Activated T-helper 2 cell treated with anti-CD3 and anti-CD28 coated beads, Interferon-gamma antibody, Interleukin-2, Interleukin-4, amounts not matched to agents 10 μg/mL and 5 μg/mL and 100 μg/mL, durations not matched to agents 14 hours and 24 hours and 36 hours (primary cell): ENCODE measurements at regions of chr3 and their contacts with region 1.

Region 1: DNA sequence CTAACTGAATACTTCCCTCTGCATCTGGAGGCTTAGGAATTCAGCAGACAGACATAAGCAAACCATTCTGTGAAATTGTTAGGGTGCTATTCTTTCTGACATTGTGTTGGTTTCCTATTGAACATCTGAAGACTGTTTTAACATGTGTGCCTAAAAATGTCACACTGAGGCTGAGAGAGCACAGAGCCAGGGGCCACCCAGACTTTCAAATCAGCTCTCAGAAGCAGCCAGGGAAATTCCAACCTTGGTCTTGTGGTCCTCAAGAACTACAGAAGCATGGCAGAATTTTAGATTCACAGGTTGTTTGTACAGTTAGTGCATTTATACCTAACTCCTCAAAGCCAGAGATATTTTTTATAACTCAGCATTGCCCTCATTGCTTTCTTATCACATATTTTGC is 929.2 kb upstream of the CFAP20DC start:
- DNase-seq: no peak
- H3K4me3 Mint-ChIP-seq: peak overlapping the region; percentile 35
- H3K27ac Mint-ChIP-seq: peak overlapping the region; percentile 92
- H3K4me1 Mint-ChIP-seq: peaks cover 26% of the 10 kb centered on the region
- H3K27me3 Mint-ChIP-seq: no peaks in the 10 kb centered on the region

Region 2: DNA sequence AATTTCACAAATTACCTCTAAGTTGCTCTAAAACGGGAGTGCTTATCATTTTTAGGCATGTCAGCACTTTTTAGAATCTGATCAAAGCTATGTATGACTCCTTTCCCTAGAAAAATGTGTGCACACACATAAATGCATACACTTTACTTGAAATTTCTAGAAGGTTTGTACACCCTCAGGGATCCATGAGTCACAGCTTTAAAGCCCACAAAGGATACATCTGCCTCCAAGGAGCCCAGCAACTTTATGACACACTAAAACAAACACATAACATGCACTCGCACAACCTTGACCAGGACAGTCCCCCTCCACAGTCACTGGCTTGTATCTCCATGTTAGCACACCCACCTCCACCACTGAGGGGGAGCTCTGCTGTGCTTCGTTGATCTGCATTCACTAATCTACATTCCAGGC is 207.2 kb before region 1 on chr3:
- intact Hi-C with region 1: loop called (anchors 10 kb)
- DNase-seq: no peak
- H3K4me3 Mint-ChIP-seq: no peak overlapping the region
- H3K27ac Mint-ChIP-seq: no peak overlapping the region
- H3K4me1 Mint-ChIP-seq: peaks cover 50% of the 10 kb centered on the region
- H3K27me3 Mint-ChIP-seq: no peaks in the 10 kb centered on the region

Region 3: DNA sequence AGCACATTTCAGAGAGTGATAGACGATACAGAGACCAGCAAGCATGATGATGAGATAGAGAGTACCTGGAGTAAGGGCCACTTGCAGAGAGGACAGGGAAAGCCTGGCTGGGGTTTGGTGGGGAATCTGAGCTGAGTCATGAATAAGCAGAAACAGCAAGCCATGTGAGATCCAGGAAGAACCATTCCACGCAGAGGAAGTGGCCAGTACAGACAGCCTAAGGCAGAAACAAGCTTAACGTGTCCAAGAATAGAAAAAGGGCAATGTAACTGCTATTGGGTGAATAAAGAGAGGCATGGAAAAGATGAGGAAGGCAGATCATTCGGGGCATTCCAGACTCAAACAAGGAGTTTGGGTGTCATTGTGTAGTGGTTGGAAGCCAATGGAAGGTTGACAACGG is 112.9 kb before region 1 on chr3:
- intact Hi-C with region 1: loop called (anchors 1 kb)
- DNase-seq: no peak
- H3K4me3 Mint-ChIP-seq: no peak overlapping the region
- H3K27ac Mint-ChIP-seq: peak overlapping the region; percentile 2
- H3K4me1 Mint-ChIP-seq: peaks cover 31% of the 10 kb centered on the region
- H3K27me3 Mint-ChIP-seq: no peaks in the 10 kb centered on the region

Region 4: DNA sequence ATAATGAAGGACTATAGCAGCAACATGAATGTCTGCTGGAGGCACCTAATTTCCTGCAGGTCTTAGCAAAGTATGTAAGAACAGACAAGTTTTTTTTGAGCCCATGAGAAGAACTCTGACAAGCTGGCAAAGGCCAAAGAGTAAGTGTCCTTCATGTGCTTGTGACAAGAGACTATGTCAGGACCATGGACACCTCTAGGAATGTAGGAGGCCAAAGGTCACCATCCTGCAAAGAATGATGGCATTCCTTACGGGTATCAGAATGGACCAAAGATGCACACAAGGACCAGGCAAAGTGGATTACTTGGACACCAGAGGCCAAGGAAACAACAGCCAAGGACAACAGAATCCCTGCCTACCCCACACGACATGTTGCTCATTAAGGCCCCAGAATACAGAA is 70.7 kb before region 1 on chr3:
- intact Hi-C with region 1: no loop called
- DNase-seq: no peak
- H3K4me3 Mint-ChIP-seq: no peak overlapping the region
- H3K27ac Mint-ChIP-seq: no peak overlapping the region
- H3K4me1 Mint-ChIP-seq: no peaks in the 10 kb centered on the region
- H3K27me3 Mint-ChIP-seq: no peaks in the 10 kb centered on the region

Region 5: DNA sequence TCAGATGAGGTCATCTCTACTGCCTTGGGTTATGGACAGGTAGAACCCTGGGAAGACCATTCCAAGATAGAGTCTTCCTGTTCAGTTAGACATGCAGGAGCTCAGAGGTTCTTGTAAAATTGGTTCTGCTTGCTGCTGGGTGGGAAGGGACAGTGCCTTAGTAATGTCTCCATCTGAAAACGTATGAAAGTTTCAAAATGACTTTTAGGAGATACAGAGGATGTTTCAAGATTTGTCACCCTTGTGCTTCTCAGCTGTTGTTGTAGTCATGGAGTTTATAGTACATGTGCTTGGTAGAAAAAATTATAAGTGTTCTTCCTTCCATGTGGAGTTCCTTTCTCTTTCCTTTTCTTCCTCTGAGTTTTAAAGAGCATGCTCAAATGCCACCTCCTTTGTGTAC is 44.0 kb before region 1 on chr3:
- intact Hi-C with region 1: loop called (anchors 1 kb)
- DNase-seq: no peak
- H3K4me3 Mint-ChIP-seq: no peak overlapping the region
- H3K27ac Mint-ChIP-seq: peak overlapping the region; percentile 69
- H3K4me1 Mint-ChIP-seq: peaks cover 38% of the 10 kb centered on the region
- H3K27me3 Mint-ChIP-seq: no peaks in the 10 kb centered on the region

Region 6: GRCh38 chr3:60017631-60018030 is 38.7 kb after region 1 on chr3:
- intact Hi-C with region 1: loop called (anchors 1 kb)
- DNase-seq: peak; percentile 63
- H3K4me3 Mint-ChIP-seq: peak overlapping the region; percentile 61
- H3K27ac Mint-ChIP-seq: peak overlapping the region; percentile 98
- H3K4me1 Mint-ChIP-seq: peaks cover 64% of the 10 kb centered on the region
- H3K27me3 Mint-ChIP-seq: no peaks in the 10 kb centered on the region

Region 7: DNA sequence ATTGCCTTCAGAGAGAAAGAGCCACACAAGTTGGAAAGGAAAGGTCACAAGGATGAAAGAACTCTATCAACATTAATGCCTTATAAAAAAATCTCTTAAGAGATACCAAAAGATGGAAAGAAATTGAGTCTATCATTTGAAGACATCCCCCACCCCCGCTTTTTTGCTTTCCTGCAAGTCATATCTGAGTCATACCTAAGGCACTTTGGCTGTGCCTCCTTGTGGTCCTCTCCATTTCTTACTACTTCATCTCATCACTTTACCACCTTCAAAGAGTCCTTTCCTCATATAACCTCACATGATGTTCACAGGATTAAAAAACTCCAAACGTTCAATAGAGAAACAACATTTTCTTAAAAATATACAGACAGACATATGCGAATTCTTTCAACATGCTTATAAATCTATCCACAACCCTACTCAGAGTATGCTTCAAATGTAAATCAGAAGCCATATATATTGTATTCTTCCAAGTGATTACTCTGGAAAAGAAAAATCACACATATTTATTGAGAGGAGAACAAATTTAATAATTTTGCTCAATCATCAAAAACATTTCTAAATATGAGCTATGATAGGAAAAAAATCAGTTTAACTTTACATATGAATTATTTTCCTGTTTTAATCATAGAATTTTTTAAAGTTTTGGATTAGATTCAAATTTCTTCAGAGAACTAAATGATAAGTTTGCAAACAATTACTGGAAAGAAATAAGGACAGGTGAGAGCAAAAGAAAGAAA is 74.7 kb after region 1 on chr3:
- intact Hi-C with region 1: loop called (anchors 1 kb)
- DNase-seq: no peak
- H3K4me3 Mint-ChIP-seq: peak overlapping the region; percentile 35
- H3K27ac Mint-ChIP-seq: peak overlapping the region; percentile 89
- H3K4me1 Mint-ChIP-seq: peaks cover 79% of the 10 kb centered on the region
- H3K27me3 Mint-ChIP-seq: no peaks in the 10 kb centered on the region